Dendritic cell treated with granulocyte-macrophage colony-stimulating factor and Interleukin-4, amounts not matched to agents 40 ng/mL and 50 ng/mL, for 4 days (primary cell): ENCODE measurements at regions of chr2 and their contacts with region 1.

Region 1: DNA sequence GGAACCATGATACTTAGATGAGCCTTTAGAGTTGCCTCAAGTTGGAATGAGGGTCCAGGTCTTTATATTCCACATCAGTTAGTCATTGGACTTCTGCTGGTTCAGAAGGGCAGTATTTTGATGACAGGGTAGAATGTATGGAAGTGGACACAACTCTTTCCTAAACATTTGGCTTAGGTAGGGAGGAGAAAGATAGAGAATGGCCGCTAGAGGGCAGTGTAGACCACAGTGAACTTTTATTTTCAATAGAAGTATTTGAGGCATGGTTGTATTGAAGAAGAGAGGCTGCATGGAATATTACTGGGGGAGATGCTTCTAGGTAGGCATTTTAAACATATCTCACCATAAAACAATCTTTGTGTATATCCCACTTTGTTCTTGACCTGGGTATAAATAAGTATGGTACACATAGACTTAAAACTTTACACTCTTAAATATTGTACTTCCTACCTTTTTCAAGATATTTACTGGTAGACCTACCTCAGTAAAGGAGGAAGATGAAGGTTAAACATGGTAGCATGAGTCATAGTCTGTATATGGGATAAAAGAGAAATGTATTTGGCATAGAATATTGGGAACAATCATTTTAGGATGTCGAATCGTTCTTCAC is 497.6 kb upstream of the FAM98A start:
- H3K4me3 Mint-ChIP-seq: no peak overlapping the region
- H3K27ac Mint-ChIP-seq: no peak overlapping the region
- H3K4me1 Mint-ChIP-seq: no peaks in the 10 kb centered on the region
- H3K27me3 Mint-ChIP-seq: no peaks in the 10 kb centered on the region

Region 2: DNA sequence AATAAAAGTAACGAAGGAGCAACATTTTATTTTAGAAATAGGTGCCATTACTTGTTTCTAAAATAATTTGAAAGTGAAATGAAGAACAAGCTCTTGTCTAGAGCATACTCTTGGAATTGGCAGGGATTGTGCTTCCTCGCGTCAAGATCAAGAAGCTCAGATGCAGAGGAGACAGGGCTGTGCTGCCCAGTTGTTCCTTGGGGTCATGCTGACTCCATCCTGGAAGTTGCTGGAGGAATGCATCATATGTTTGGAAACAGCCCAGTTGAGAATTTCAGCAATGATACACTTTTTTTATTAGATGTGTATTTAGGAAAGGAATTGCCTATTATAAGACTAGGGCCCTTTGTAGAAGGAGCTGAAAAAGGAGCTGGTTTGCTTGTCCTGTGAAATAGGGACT is 1132.7 kb before region 1 on chr2:
- intact Hi-C with region 1: no loop called
- H3K4me3 Mint-ChIP-seq: no peak overlapping the region
- H3K27ac Mint-ChIP-seq: no peak overlapping the region
- H3K4me1 Mint-ChIP-seq: no peaks in the 10 kb centered on the region
- H3K27me3 Mint-ChIP-seq: peaks cover 25% of the 10 kb centered on the region

Region 3: GRCh38 chr2:34121076-34121475 is 24.4 kb after region 1 on chr2:
- intact Hi-C with region 1: no loop called
- H3K4me3 Mint-ChIP-seq: no peak overlapping the region
- H3K27ac Mint-ChIP-seq: no peak overlapping the region
- H3K4me1 Mint-ChIP-seq: no peaks in the 10 kb centered on the region
- H3K27me3 Mint-ChIP-seq: no peaks in the 10 kb centered on the region

Region 4: GRCh38 chr2:35410431-35411061 is 1313.9 kb after region 1 on chr2:
- intact Hi-C with region 1: loop called (anchors 2 kb)
- H3K4me3 Mint-ChIP-seq: no peak overlapping the region
- H3K27ac Mint-ChIP-seq: no peak overlapping the region
- H3K4me1 Mint-ChIP-seq: no peaks in the 10 kb centered on the region
- H3K27me3 Mint-ChIP-seq: no peaks in the 10 kb centered on the region